Sigmoid colon (tissue), 7 donors: ENCODE measurements at regions of chr18 and their contacts with region 1.

Region 1: GRCh38 chr18:74652392-74652988 is 54.8 kb downstream of the ZNF407 start:
- DNase-seq: no peak
- H3K4me3 ChIP-seq: no peak overlapping the region
- H3K27ac ChIP-seq: peak overlapping the region in 1 of 4 donors; percentile 46
- H3K4me1 ChIP-seq: peaks cover 0 to 25% (median 4%) of the 10 kb centered on the region in 4 donors
- H3K27me3 ChIP-seq: no peaks in the 10 kb centered on the region
- CTCF ChIP-seq: peak in 3 of 4 experiments; percentile 38 to 56 (median 55)
- EP300 ChIP-seq: no peak
- POLR2A ChIP-seq: no peak

Region 2: GRCh38 chr18:74760446-74760845 is 108.0 kb after region 1 on chr18:
- intact Hi-C with region 1: no loop called
- DNase-seq: no peak
- H3K4me3 ChIP-seq: no peak overlapping the region
- H3K27ac ChIP-seq: no peak overlapping the region
- H3K4me1 ChIP-seq: no peaks in the 10 kb centered on the region
- H3K27me3 ChIP-seq: no peaks in the 10 kb centered on the region
- CTCF ChIP-seq: no peak
- EP300 ChIP-seq: no peak
- POLR2A ChIP-seq: no peak

Region 3: DNA sequence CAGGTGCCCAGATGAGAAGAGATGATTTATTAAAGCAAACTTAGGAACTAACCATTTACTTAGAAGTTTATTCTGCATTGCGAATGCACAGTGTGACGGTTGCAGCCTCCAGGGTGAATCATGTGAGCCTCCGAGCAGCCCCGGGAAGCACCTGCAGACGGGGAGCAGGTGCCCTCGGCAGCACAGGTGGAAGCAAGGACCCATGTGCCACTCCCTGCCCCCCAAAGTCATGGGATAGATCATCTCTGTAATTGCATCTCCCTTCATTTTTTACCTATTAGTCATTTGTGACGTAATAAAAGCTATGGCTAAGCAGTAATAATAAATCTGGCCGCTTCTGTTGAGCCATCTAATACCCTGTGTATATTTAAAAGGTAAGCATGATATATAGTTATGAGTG is 459.2 kb after region 1 on chr18:
- intact Hi-C with region 1: loop called (anchors 10 kb)
- DNase-seq: no peak
- H3K4me3 ChIP-seq: no peak overlapping the region
- H3K27ac ChIP-seq: peak overlapping the region in 2 of 4 donors; percentile 66 to 75
- H3K4me1 ChIP-seq: peaks cover 0 to 44% (median 23%) of the 10 kb centered on the region in 4 donors
- H3K27me3 ChIP-seq: no peaks in the 10 kb centered on the region
- CTCF ChIP-seq: no peak
- EP300 ChIP-seq: no peak
- POLR2A ChIP-seq: no peak

Region 4: DNA sequence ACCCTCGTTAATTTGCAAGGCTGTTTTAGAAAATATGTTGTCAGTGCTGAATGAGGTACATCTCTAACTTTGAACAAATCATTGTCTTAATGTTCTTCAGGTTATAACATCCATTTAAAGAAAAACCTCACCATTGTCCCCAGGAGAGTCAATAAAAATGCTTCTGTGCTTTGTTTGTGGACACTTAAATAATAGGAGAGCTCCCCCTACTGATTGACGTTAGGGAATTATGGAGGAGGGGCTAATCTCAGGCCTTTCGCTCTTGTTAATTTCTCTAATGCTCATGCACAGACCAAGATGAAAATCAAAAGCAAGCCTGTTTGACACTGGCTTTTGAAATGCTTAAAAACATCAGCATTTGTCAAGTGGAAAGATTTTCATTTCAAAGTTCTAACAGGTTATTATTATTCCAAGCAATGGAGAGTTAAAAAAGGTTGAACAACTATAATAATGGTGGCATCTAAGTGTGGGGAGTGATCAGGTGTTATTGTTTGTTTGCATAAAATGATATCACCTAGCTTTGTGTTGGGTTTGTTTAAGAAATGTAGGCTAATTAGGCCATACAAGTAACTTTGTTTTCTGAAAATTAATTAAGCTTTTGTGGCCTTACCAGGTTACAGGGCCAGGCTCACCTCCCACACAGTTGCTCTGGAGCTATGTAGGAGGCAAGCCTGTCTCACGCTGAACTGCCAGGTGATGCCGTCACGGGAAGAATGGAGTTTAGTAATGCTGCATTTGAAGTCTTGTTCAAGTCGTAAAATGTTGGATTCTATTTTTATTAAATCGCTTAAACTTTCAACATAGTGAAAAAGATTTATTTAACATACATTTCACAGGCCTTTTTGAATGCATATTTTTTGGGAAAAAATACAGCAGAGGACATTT is 826.7 kb after region 1 on chr18:
- intact Hi-C with region 1: loop called (anchors 2 kb)
- DNase-seq: no peak
- H3K4me3 ChIP-seq: no peak overlapping the region
- H3K27ac ChIP-seq: no peak overlapping the region
- H3K4me1 ChIP-seq: peaks cover 0 to 22% (median 5%) of the 10 kb centered on the region in 4 donors
- H3K27me3 ChIP-seq: no peaks in the 10 kb centered on the region
- CTCF ChIP-seq: peak in 2 of 4 experiments; percentile 52 to 53
- EP300 ChIP-seq: no peak
- POLR2A ChIP-seq: no peak

Region 5: DNA sequence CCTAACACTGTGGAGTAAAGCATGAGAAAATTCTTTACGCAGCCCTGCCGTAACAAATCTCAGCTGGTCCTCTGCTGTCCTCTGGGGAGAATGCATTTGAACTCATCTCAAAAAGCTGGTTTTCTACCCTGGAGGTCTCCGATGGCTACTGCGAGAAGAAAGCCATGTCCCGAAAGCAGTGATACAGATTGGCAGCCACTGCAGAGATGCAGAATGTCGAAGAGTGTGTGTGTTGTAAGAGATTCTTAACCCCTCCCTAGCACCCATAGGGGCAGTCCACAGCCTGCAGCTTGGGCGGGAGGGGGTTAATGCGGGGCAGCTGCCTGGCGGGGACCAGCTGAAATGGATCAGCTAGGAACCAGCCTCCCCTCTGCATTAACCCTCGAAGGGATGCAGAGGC is 1606.6 kb after region 1 on chr18:
- intact Hi-C with region 1: loop called (anchors 5 kb)
- DNase-seq: no peak
- H3K4me3 ChIP-seq: no peak overlapping the region
- H3K27ac ChIP-seq: peak overlapping the region in 2 of 4 donors; percentile 28 to 54
- H3K4me1 ChIP-seq: peaks cover 0 to 41% (median 14%) of the 10 kb centered on the region in 4 donors
- H3K27me3 ChIP-seq: no peaks in the 10 kb centered on the region
- CTCF ChIP-seq: no peak
- EP300 ChIP-seq: no peak
- POLR2A ChIP-seq: no peak